AG04449 (cell line): ENCODE measurements at regions of chr10 and their contacts with region 1.

Region 1: GRCh38 chr10:47311932-47312662 is 10.2 kb upstream of the GDF2 start:
- DNase-seq: peak; percentile 12
- H3K4me3 ChIP-seq: no peak overlapping the region
- CTCF ChIP-seq: peak; percentile 98

Region 2: GRCh38 chr10:47024399-47025252 is 287.5 kb before region 1 on chr10:
- CTCF ChIA-PET with region 1: interaction called, 81 read pairs
- POLR2A ChIA-PET with region 1: no interaction called
- DNase-seq: no peak
- H3K4me3 ChIP-seq: no peak overlapping the region
- CTCF ChIP-seq: peak; percentile 86

Region 3: GRCh38 chr10:47038851-47039561 is 273.1 kb before region 1 on chr10:
- CTCF ChIA-PET with region 1: interaction called, 291 read pairs
- POLR2A ChIA-PET with region 1: no interaction called
- DNase-seq: no peak
- H3K4me3 ChIP-seq: no peak overlapping the region
- CTCF ChIP-seq: no peak

Region 4: GRCh38 chr10:47247148-47248059 is 64.7 kb before region 1 on chr10:
- CTCF ChIA-PET with region 1: no interaction called
- POLR2A ChIA-PET with region 1: no interaction called
- DNase-seq: no peak
- H3K4me3 ChIP-seq: no peak overlapping the region
- CTCF ChIP-seq: no peak

Region 5: GRCh38 chr10:47288916-47289495 is 23.1 kb before region 1 on chr10:
- CTCF ChIA-PET with region 1: no interaction called
- POLR2A ChIA-PET with region 1: no interaction called
- DNase-seq: no peak
- H3K4me3 ChIP-seq: no peak overlapping the region
- CTCF ChIP-seq: no peak

Region 6: DNA sequence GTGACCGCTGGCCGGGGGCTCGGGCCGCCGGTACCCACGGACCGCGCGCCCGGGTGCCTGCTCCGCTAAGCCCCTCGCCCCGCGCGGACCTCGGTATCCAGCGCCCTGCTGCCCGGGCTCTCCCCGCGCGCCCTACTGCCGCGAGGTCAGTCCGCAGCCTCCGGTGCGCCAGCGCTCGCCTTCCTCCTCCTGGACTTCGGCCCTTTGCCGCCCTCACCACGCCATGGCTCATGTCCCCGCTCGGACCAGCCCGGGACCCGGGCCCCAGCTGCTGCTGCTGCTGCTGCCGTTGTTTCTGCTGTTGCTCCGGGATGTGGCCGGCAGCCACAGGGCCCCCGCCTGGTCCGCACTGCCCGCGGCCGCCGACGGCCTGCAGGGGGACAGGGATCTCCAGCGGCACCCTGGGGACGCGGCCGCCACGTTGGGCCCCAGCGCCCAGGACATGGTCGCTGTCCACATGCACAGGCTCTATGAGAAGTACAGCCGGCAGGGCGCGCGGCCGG is 11.6 kb before region 1 on chr10:
- CTCF ChIA-PET with region 1: interaction called, 19 read pairs
- POLR2A ChIA-PET with region 1: no interaction called
- DNase-seq: no peak
- H3K4me3 ChIP-seq: no peak overlapping the region
- CTCF ChIP-seq: no peak